Activated CD4-positive, alpha-beta T cell treated with anti-CD3 and anti-CD28 coated beads for 36 hours (primary cell): ENCODE measurements at regions of chr18 and their contacts with region 1.

Region 1: DNA sequence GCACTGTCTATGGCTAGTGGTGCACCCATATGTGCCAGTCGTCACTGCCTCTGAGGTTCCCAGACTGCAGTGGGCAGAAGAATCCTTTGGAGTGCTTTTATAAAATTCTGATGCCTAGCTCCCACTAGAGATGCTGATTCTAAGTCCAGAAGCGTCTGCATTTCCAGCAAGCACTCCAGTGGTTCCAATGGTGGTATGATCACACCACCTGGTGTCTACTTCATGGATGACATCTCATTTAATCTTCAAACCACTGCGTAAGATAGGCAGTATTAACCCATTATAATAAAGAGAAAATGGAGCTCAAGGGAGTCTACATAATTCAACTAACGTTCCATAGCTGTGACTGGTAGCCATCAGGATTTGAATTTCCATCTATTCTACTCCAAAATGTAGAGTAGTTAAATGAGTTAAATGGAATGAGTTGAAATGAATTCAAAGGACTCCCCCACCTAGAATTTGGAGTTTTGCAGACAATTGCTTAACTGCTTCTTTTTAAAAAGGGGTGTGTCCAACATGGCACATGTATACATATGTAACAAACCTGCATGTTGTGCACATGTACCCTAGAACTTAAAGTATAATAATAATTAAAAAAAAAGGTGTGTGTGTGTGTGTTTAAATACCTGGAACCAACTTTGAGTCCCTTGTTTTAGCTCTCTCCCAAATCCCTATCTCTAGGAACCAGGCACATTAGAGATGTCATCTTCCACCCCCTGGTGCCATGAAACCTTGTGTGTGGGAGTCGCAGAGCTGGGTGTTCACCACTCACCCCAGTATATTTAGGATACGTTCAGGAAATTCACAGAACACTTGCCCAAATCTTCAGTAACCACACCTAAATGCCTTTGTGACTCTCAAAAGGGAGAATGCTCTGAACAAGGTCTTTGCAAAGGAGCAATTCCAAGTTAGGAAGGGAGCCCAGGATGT is 14.1 kb downstream of the LAMA3 start:
- DNase-seq: peak; percentile 27
- ATAC-seq: peak; percentile 76
- H3K4me3 Mint-ChIP-seq: no peak overlapping the region
- H3K27ac Mint-ChIP-seq: no peak overlapping the region
- H3K4me1 Mint-ChIP-seq: no peaks in the 10 kb centered on the region
- H3K27me3 Mint-ChIP-seq: peaks cover 8% of the 10 kb centered on the region

Region 2: DNA sequence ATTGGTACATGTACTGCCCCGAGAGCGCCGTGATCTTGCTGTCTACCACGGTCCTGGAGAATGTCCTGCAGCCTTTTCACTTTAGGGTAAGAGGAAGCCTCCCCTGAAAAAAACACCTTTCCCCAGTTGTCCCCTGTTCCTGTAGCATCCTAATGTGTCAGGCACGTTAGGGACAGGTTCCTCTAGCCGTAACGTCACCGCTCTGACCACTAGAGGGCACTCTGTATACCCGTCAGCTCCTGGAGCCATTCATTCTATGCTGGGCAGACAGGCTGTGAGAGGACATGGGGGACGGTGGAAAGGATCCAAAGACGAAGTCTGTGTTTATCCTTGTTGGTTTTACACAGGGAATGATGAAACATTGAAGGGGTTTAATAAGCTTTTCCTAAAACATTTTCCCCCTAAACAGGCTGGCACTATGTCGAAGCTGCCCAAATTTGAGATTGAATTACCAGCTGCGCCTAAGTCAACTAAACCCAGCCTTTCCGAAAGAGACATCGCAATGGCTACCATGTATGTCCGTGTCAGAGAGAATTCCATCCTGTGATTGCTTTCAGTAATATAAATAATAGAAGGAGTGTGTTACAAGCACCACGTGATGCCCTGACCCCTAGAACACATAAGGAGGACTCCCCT is 187.3 kb before region 1 on chr18:
- CTCF ChIA-PET with region 1: interaction called, 6 read pairs
- POLR2A ChIA-PET with region 1: no interaction called
- intact Hi-C with region 1: loop called (anchors 5 to 10 kb)
- DNase-seq: peak; percentile 86
- ATAC-seq: peak; percentile 98
- H3K4me3 Mint-ChIP-seq: no peak overlapping the region
- H3K27ac Mint-ChIP-seq: peak overlapping the region; percentile 60
- H3K4me1 Mint-ChIP-seq: peaks cover 9% of the 10 kb centered on the region
- H3K27me3 Mint-ChIP-seq: no peaks in the 10 kb centered on the region

Region 3: DNA sequence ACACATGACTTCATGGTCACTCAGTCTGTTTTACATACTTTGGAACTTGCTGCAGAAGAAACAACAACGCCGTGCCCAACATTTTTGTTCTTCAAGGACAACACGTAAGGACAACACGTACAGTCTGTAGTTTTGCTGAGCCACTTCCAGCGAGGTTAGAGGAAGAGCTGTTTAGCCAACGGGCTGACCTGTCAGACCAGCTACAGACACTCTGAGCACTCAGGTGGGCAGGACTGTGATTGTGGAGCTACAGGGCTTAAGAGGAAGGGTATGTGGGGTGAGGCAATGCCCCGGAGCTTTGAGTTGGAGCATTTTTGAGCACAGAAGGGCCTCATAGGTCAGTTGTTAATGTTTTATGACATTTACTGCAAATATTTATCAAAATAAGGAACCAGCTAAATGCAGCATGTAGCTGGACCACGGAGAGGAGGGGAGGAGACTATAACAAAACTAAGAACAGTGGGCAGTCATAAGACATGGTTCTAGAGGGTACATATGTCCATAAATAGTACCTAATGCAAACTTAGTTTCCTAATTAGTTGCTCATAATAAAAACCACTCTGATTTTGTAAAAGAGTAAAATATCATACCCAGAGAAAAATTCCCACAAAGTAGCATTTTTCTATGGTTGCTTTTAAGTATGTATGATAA is 90.8 kb before region 1 on chr18:
- CTCF ChIA-PET with region 1: interaction called, 23 read pairs
- POLR2A ChIA-PET with region 1: no interaction called
- intact Hi-C with region 1: no loop called
- DNase-seq: no peak
- ATAC-seq: no peak
- H3K4me3 Mint-ChIP-seq: no peak overlapping the region
- H3K27ac Mint-ChIP-seq: no peak overlapping the region
- H3K4me1 Mint-ChIP-seq: no peaks in the 10 kb centered on the region
- H3K27me3 Mint-ChIP-seq: peaks cover 3% of the 10 kb centered on the region

Region 4: GRCh38 chr18:23619388-23619881 is 83.9 kb before region 1 on chr18:
- CTCF ChIA-PET with region 1: interaction called, 28 read pairs
- POLR2A ChIA-PET with region 1: no interaction called
- intact Hi-C with region 1: loop called (anchors 1 kb)
- DNase-seq: peak; percentile 29
- ATAC-seq: peak; percentile 42
- H3K4me3 Mint-ChIP-seq: peak overlapping the region; percentile 36
- H3K27ac Mint-ChIP-seq: no peak overlapping the region
- H3K4me1 Mint-ChIP-seq: peaks cover 2% of the 10 kb centered on the region
- H3K27me3 Mint-ChIP-seq: peaks cover 38% of the 10 kb centered on the region

Region 5: DNA sequence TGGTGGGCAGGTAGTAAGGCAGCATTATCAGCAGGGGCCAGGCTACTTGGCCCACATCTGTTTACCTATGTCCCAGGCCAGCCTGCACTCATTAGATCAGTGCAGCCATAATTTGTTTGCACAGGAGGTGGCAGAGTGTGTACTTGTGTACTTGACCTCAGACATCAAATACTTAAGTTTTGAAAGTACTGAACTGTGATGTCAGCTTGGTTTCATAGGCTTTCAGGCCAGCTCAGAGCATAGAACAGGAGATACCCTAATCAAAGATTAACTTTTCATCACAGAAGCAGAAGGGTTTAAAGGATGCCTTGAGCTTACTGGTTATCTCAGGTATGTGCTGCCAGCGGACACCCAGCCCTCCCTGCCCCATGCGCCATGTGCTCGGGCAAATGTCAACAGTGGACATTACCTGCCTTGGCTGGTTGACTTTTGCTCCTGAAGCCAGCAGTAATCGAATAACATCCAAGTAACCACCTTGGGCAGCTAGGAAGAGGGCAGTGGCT is 73.8 kb before region 1 on chr18:
- CTCF ChIA-PET with region 1: interaction called, 25 read pairs
- POLR2A ChIA-PET with region 1: no interaction called
- intact Hi-C with region 1: no loop called
- DNase-seq: no peak
- ATAC-seq: no peak
- H3K4me3 Mint-ChIP-seq: no peak overlapping the region
- H3K27ac Mint-ChIP-seq: no peak overlapping the region
- H3K4me1 Mint-ChIP-seq: peaks cover 9% of the 10 kb centered on the region
- H3K27me3 Mint-ChIP-seq: peaks cover 2% of the 10 kb centered on the region

Region 6: DNA sequence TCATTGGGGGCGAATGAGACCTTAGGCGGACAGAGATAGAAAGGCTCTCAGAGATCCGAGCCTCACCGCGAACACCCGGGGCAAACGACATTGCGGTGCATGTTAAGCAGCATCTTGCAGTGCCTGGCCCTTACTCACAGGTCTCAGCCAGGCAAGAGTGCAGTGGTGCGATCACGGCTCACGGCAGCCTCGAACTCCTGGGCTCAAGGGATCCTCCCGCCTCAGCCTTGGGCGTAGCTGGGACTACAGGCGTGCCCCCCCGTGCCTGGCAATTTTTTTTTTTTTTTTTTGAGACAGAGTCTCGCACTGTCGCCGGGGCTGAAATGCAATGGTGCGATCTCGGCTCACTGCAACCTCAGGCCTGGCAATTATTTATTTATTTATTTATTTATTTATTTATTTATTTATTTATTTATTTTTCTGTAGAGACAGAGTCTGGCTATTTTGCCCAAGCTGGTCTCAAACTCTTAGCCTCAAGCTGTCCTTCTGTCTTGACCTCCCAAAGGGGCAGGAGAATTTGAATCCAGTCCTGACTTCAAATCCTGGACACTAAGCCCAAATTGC is 12.7 kb before region 1 on chr18:
- CTCF ChIA-PET with region 1: interaction called, 18 read pairs
- POLR2A ChIA-PET with region 1: no interaction called
- intact Hi-C with region 1: no loop called
- DNase-seq: peak; percentile 13
- ATAC-seq: peak; percentile 7
- H3K4me3 Mint-ChIP-seq: peak overlapping the region; percentile 40
- H3K27ac Mint-ChIP-seq: no peak overlapping the region
- H3K4me1 Mint-ChIP-seq: peaks cover 5% of the 10 kb centered on the region
- H3K27me3 Mint-ChIP-seq: peaks cover 32% of the 10 kb centered on the region

Region 7: DNA sequence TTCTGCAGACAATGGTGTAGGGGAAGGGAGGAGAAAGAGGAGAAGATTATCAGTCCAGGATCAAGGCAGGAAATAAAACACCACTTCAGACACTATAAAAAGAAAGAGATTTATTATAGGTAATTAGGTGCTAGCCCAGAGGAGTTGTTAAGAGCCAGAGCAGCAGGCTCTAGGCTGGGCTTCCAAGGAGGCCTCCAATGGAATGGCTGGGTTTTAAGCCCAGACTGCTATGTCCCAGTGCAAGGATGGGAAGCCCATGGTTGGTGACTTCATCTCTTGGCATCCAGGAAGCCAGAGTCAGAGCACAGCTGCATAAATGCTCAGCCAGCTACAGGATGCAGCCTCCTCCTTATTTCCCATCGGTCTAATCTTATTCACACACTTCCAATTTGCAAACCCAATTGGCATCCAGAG is 81.5 kb after region 1 on chr18:
- CTCF ChIA-PET with region 1: no interaction called
- POLR2A ChIA-PET with region 1: no interaction called
- intact Hi-C with region 1: no loop called
- DNase-seq: no peak
- ATAC-seq: no peak
- H3K4me3 Mint-ChIP-seq: no peak overlapping the region
- H3K27ac Mint-ChIP-seq: no peak overlapping the region
- H3K4me1 Mint-ChIP-seq: no peaks in the 10 kb centered on the region
- H3K27me3 Mint-ChIP-seq: peaks cover 2% of the 10 kb centered on the region

Region 8: DNA sequence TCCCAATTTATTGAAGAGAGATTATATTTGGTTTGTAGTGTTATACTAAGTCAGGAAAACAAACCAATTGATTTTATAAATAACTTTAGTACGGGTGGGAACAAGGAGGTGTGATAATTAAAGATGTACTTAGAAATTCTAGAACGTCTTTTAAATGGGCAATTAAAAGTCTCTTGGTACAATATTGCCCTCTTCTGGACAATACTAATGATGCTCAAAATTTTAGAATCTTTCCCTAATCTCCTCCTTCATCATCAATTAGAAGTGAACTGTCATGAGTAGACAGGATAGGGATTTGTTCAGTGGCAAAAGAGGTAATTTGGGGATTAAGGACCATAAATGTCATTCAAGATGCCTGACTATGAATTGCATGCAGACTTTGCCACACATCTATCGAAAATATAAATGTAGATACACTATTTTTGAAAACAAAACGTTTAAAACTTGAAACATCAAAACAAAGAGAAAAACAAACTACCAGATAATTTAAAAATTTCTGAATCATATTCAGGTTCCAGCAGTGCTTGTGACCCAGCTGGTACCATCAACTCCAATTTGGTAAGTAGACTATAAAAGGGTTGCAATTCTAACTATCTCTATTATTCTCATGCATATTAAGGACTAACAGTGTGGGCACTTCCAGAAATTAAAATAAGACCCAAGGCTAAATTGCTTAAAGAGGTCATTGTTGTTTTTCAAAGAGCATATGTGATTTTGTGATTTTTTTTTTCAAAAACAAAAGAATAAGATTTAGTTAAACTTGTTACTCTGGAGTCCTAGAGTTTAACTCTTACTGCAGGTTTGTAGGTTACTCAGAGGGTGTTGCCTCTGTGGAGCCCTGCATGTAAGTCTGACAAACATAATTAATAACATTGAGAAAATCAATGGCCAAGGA is 109.5 kb after region 1 on chr18:
- CTCF ChIA-PET with region 1: interaction called, 5 read pairs
- POLR2A ChIA-PET with region 1: no interaction called
- intact Hi-C with region 1: loop called in 1 of 2 experiments (anchors 10 kb)
- DNase-seq: no peak
- ATAC-seq: no peak
- H3K4me3 Mint-ChIP-seq: no peak overlapping the region
- H3K27ac Mint-ChIP-seq: no peak overlapping the region
- H3K4me1 Mint-ChIP-seq: peaks cover 13% of the 10 kb centered on the region
- H3K27me3 Mint-ChIP-seq: peaks cover 2% of the 10 kb centered on the region